Esophagus muscularis mucosa (tissue), 4 donors: ENCODE measurements at regions of chr3 and their contacts with region 1.

Region 1: GRCh38 chr3:48898383-48899234 is at the start of gene SLC25A20:
- DNase-seq: peak; percentile 95
- H3K4me3 ChIP-seq: peak within 1 kb of the TSS; percentile 74 to 95 (median 84)
- H3K27ac ChIP-seq: peak within 1 kb of the TSS; percentile 66 to 92 (median 84)
- H3K4me1 ChIP-seq: peaks cover 13 to 25% (median 19%) of the 10 kb centered on the region in 4 donors
- H3K27me3 ChIP-seq: no peaks in the 10 kb centered on the region
- CTCF ChIP-seq: peak in 1 of 3 experiments; percentile 3
- EP300 ChIP-seq: no peak
- POLR2A ChIP-seq: no peak
- total RNA-seq, gene SLC25A20: 13.3 to 34.6 (median 21.8) TPM

Region 2: GRCh38 chr3:48415554-48415953 is 483.1 kb before region 1 on chr3:
- intact Hi-C with region 1: no loop called
- DNase-seq: no peak
- H3K4me3 ChIP-seq: no peak overlapping the region
- H3K27ac ChIP-seq: no peak overlapping the region
- H3K4me1 ChIP-seq: peaks cover 0 to 17% (median 14%) of the 10 kb centered on the region in 4 donors
- H3K27me3 ChIP-seq: no peaks in the 10 kb centered on the region
- CTCF ChIP-seq: no peak
- EP300 ChIP-seq: no peak
- POLR2A ChIP-seq: no peak

Region 3: GRCh38 chr3:48435774-48436476 is 462.7 kb before region 1 on chr3:
- intact Hi-C with region 1: no loop called
- DNase-seq: no peak
- H3K4me3 ChIP-seq: peak overlapping the region in 1 of 4 donors; percentile 2
- H3K27ac ChIP-seq: peak overlapping the region; percentile 93 to 99 (median 98)
- H3K4me1 ChIP-seq: peaks cover 37 to 65% (median 63%) of the 10 kb centered on the region in 4 donors
- H3K27me3 ChIP-seq: no peaks in the 10 kb centered on the region
- CTCF ChIP-seq: peak; percentile 99 to 100 (median 100)
- EP300 ChIP-seq: no peak
- POLR2A ChIP-seq: no peak

Region 4: GRCh38 chr3:48788544-48789162 is 110.0 kb before region 1 on chr3:
- intact Hi-C with region 1: no loop called
- DNase-seq: no peak
- H3K4me3 ChIP-seq: no peak overlapping the region
- H3K27ac ChIP-seq: no peak overlapping the region
- H3K4me1 ChIP-seq: no peaks in the 10 kb centered on the region
- H3K27me3 ChIP-seq: no peaks in the 10 kb centered on the region
- CTCF ChIP-seq: no peak
- EP300 ChIP-seq: no peak
- POLR2A ChIP-seq: no peak

Region 5: GRCh38 chr3:48837163-48837562 is 61.4 kb before region 1 on chr3:
- intact Hi-C with region 1: no loop called
- DNase-seq: no peak
- H3K4me3 ChIP-seq: no peak overlapping the region
- H3K27ac ChIP-seq: no peak overlapping the region
- H3K4me1 ChIP-seq: peaks cover 0 to 17% (median 4%) of the 10 kb centered on the region in 4 donors
- H3K27me3 ChIP-seq: no peaks in the 10 kb centered on the region
- CTCF ChIP-seq: no peak
- EP300 ChIP-seq: no peak
- POLR2A ChIP-seq: no peak

Region 6: DNA sequence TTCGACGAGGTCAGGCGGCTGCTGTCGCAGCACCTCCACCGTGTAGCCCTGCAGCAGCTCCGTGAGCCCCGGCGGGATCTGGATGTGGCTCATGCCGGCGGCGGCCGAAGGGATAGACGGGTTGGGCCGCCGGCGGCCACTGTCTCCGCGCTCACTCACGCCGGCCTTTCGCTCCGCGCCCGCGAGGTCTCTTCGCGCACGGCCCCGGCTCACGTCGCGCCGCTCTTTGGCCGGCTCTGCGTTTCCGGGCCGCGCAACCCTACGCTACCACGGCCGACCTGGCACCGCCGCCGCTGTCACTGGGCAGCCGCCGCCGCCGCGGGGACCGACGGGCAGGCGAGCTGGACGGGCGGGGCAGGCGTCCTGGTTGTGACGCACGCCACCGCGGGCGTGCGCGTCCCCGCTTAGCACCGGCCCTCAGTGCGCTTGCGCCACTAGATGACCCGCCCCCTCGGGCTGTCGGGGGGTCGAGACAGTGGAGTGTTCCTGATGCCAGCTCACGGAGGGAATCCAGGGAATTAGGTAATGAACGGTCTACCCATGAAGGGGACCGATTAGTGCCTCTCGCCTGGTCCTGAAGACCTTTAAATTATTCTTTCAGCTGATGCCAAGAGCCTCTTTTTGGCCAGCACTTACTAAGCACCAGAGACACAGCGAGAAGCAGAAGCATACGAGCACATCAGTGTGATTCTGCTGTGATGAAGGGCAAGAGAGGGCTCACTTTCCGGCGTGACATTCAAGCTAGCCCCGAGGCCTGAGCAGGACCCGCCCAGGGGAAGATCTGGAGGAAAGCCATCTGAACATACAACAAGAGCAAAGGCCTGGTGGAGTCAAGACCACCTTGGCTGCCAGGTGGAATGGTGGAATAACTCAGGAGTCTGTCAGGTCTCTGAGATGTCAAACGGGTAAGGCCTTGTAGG is 50.8 kb before region 1 on chr3 and contains the start of gene PRKAR2A:
- intact Hi-C with region 1: loop called (anchors 5 kb)
- DNase-seq: peak; percentile 95
- H3K4me3 ChIP-seq: peak within 1 kb of the TSS; percentile 76 to 94 (median 84)
- H3K27ac ChIP-seq: peak within 1 kb of the TSS; percentile 91 to 97 (median 96)
- H3K4me1 ChIP-seq: peaks cover 19 to 30% (median 28%) of the 10 kb centered on the region in 4 donors
- H3K27me3 ChIP-seq: no peaks in the 10 kb centered on the region
- CTCF ChIP-seq: peak in 2 of 3 experiments; percentile 6 to 9
- EP300 ChIP-seq: no peak
- POLR2A ChIP-seq: peak; percentile 73
- total RNA-seq, gene PRKAR2A: 30.7 to 43.3 (median 34.2) TPM